ENCODE measurements at regions of chr22 and their contacts with region 1.

Region 1: GRCh38 chr22:22884010-22884887 is 3.4 kb upstream of the IGLL5 start:
- DNase-seq: peak; percentile 90
- H3K4me3 ChIP-seq: peak overlapping the region; percentile 15
- H3K27ac ChIP-seq: peak overlapping the region; percentile 5
- H3K4me1 ChIP-seq: peaks cover 87% of the 10 kb centered on the region
- CTCF ChIP-seq: peak; percentile 94

Region 2: DNA sequence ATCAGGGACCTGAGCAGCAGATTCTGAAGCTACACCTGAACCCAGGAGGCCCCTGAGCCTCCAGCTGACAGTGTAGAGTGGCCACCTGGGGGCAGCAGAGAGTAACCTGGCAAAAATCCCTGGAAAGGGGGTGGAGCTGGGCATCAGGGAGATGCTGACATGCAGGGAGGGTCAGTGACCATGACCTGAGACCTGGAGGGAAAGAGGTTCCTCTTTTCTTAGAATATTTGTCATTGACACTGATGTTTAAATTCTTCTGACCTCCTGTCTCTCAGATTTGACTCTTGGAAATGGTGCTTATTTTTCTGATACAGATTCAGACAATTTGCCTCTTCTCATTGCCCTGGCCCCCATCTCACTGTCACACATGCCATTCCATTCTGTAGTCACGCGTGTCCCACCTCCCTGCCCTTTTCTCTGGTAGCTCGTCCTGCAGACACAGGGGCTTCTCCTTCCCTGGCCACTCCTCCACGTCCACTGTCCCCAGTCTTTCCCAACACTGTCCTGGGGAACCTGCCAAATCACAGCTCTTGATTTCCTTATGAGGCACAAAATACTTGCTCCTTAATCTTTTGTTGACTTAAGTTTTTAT is 113.9 kb before region 1 on chr22:
- CTCF ChIA-PET with region 1: interaction called, 4 read pairs
- POLR2A ChIA-PET with region 1: no interaction called
- intact Hi-C with region 1: loop called (anchors 5 kb)
- DNase-seq: peak; percentile 59
- H3K4me3 ChIP-seq: no peak overlapping the region
- H3K27ac ChIP-seq: no peak overlapping the region
- H3K4me1 ChIP-seq: peaks cover 20% of the 10 kb centered on the region
- CTCF ChIP-seq: peak; percentile 93

Region 3: GRCh38 chr22:22848364-22848866 is 35.8 kb before region 1 on chr22:
- CTCF ChIA-PET with region 1: interaction called, 35 read pairs
- POLR2A ChIA-PET with region 1: interaction called, 11 read pairs
- intact Hi-C with region 1: loop called (anchors 1 kb)
- DNase-seq: peak; percentile 79
- H3K4me3 ChIP-seq: no peak overlapping the region
- H3K27ac ChIP-seq: no peak overlapping the region
- H3K4me1 ChIP-seq: peaks cover 34% of the 10 kb centered on the region
- CTCF ChIP-seq: peak; percentile 99

Region 4: DNA sequence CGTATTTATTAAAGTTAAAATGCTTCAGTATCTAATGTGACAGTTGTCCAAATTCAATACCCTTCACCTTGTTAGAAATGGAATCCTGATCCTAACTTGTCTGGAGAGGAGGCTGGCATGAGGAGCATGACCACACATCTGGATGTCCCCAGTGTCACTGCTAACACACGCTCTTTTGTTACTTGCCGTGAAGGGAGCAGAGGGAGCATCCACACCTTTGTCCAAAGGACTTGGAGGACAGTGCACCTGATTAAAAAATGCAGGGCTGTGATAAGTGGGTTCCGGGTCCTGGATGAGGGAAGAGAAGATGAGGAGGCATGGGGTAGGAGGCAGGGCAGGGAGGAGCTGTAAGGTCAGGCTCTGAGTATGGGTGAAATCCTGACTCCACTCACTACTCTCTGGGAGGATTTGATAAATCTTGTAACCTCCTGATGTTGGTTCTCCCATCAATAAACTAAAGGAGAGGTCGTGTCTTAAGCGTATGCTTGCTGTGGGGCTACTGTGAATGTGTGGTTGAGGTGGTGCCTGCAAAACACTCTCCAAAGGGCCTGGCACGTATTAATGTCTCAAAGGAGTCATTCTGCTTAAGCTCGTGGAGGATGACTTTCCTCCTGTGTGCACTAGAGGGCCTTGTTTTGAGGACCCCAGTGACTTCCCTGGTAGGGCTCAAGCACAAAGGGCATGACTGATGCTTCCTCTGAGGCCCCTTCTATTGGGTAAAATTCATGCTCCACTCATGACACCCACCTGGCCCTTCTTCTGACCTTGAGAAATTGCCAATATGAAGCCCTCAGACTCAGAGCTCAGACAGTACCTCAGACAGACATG is 13.5 kb before region 1 on chr22:
- CTCF ChIA-PET with region 1: interaction called, 10 read pairs
- POLR2A ChIA-PET with region 1: interaction called, 11 read pairs
- intact Hi-C with region 1: loop called (anchors 1 kb)
- DNase-seq: peak; percentile 82
- H3K4me3 ChIP-seq: no peak overlapping the region
- H3K27ac ChIP-seq: no peak overlapping the region
- H3K4me1 ChIP-seq: peaks cover 64% of the 10 kb centered on the region
- CTCF ChIP-seq: peak; percentile 83

Region 5: DNA sequence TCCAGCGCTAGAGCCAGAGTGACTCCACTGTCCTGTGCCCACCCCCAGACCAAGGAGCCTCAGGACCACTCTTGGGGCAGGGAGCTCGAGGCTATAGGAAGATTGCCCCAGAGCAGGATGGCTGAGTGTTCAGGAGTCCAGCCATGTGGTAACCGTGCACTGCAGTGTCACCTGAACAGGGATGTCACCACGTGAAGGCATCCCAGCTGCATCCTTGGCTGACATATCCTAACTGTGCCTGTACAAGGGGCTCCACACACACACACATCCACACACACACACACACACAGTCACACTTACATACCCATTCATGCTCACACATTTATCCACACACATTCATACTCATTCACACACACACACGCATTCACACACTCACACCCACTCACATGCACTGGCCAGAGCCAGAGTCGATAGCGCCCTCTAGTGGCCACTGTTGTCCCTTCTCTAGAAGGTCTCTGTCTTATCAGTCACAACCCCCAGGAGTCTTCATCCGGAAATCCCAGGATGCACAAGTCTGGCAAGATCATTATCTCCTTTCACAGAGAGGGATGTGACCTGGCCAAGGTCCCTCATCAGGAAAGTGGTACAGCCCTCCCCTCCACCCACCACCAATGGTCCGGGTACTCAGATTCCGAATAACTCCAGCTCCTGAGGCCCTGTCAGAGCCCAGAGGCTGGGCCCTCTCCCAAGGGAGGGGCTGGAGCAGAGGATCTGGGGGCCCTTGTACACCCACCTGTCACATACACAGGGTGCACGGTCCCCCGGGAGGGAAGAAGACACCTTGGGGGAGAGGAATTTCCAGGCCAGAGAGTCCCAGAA is 58.5 kb after region 1 on chr22:
- CTCF ChIA-PET with region 1: interaction called, 41 read pairs
- POLR2A ChIA-PET with region 1: interaction called, 308 read pairs
- intact Hi-C with region 1: loop called (anchors 2 kb)
- DNase-seq: peak; percentile 89
- H3K4me3 ChIP-seq: peak overlapping the region; percentile 14
- H3K27ac ChIP-seq: peak overlapping the region; percentile 90
- H3K4me1 ChIP-seq: peaks cover 93% of the 10 kb centered on the region
- CTCF ChIP-seq: peak; percentile 98

Region 6: GRCh38 chr22:23270212-23270733 is 386.0 kb after region 1 on chr22:
- CTCF ChIA-PET with region 1: no interaction called
- POLR2A ChIA-PET with region 1: no interaction called
- intact Hi-C with region 1: loop called (anchors 2 kb)
- DNase-seq: peak; percentile 64
- H3K4me3 ChIP-seq: peak overlapping the region; percentile 47
- H3K27ac ChIP-seq: peak overlapping the region; percentile 94
- H3K4me1 ChIP-seq: peaks cover 72% of the 10 kb centered on the region
- CTCF ChIP-seq: no peak; the same call in 1 of the 2 replicates